PC-3 (cell line): ENCODE measurements at regions of chr9 and their contacts with region 1.

Region 1: DNA sequence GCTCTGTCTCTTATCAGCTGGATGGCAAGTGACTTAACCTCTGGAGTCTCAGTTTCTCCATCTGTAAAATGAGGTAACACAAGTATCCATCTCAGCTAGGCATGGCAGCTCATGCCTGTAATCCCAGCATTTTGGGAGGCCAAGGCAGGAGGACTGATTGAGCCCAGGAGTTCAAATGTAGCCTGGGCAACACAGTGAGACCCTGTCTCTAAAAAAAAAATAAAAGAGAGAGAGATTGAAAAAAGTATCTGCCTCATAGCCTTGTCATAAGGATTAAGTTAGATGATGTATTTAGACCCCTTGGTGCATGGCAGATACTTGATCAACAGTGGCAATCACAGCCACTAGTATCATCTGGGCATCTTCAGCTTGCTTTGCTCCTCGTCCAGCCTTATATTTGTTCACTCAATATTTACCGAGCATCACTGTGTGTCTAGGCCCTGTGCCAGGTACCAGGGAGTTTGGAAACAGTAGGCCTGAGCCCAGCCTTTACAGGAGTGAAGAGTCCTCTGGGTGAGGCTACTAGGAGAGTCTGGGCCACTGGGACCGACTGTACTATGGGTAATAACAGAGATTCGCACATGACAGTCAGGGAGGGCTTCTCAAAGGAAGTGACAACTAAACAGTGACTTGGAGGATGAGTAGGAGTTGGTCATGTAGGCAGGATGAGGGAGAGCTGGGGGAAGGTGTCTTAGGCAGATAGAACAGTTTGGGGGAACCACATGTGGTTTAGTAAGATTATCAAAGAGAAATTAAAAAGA is 34.2 kb downstream of the CORO2A start:
- DNase-seq: peak; percentile 84
- ATAC-seq: peak; percentile 97
- H3K4me3 ChIP-seq: no peak overlapping the region
- H3K27ac ChIP-seq: no peak overlapping the region
- H3K4me1 ChIP-seq: peaks cover 34% of the 10 kb centered on the region
- H3K27me3 ChIP-seq: no peaks in the 10 kb centered on the region
- CTCF ChIP-seq: no peak

Region 2: GRCh38 chr9:98118640-98119601 is 39.3 kb before region 1 on chr9 and contains the start of gene TRIM14:
- CTCF ChIA-PET with region 1: no interaction called
- POLR2A ChIA-PET with region 1: interaction called, 4 read pairs
- intact Hi-C with region 1: loop called (anchors 5 kb)
- DNase-seq: peak; percentile 62
- ATAC-seq: peak; percentile 81
- H3K4me3 ChIP-seq: peak within 1 kb of the TSS; percentile 88
- H3K27ac ChIP-seq: peak within 1 kb of the TSS; percentile 30
- H3K4me1 ChIP-seq: peaks cover 16% of the 10 kb centered on the region
- H3K27me3 ChIP-seq: no peaks in the 10 kb centered on the region
- CTCF ChIP-seq: peak; percentile 47; the same call in 1 of the 2 replicates
- total RNA-seq, gene TRIM14: 11.2 and 17.3 TPM in 2 replicates